ENCODE measurements at regions of chr21 and their contacts with region 1.

Region 1: GRCh38 chr21:39867198-39867650 is at the start of gene PCP4:
- DNase-seq: no peak
- H3K4me3 ChIP-seq: no peak within 1 kb of the TSS
- H3K27ac ChIP-seq: no peak within 1 kb of the TSS
- H3K27me3 ChIP-seq: no peaks in the 10 kb centered on the region
- CTCF ChIP-seq: peak; percentile 68
- polyA plus RNA-seq, gene PCP4: not detected in 2 replicates

Region 2: GRCh38 chr21:39647476-39647875 is 219.7 kb before region 1 on chr21:
- CTCF ChIA-PET with region 1: no interaction called
- POLR2A ChIA-PET with region 1: no interaction called
- DNase-seq: peak; percentile 43
- H3K4me3 ChIP-seq: no peak overlapping the region
- H3K27ac ChIP-seq: no peak overlapping the region
- H3K27me3 ChIP-seq: peaks cover 5% of the 10 kb centered on the region
- CTCF ChIP-seq: no peak

Region 3: DNA sequence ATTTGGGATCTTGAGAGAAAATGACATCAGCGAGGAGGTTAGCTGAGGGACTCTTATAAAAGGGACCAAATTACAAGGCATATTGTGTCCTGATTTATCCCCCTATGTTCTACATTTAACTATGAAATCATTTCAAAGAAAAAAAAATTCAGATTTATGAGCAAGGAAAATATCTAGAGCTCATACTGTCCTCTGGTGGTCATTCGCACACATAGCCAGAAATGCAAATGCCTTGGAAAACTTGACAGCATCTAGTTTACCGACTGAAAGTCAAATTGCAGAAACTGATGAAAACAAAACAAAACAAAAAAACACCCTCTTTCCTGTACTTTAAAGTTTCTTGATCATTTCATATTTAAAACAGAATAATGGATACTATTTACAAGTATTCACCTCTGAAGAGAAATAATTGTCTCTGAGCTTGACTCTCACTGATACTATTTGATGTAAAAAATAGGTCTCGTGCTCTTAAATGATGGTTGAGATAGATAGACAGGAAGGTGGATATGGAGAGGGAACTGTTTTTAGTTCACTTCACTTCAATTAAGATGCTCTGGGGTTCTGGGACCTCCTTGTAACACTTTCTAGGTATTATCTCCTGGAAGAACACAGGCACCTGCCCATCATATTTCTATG is 253.8 kb after region 1 on chr21:
- CTCF ChIA-PET with region 1: interaction called, 13 read pairs
- POLR2A ChIA-PET with region 1: no interaction called
- DNase-seq: no peak
- H3K4me3 ChIP-seq: no peak overlapping the region
- H3K27ac ChIP-seq: no peak overlapping the region
- H3K27me3 ChIP-seq: no peaks in the 10 kb centered on the region
- CTCF ChIP-seq: peak; percentile 57

Measured in AG04450 (cell line).